ENCODE measurements at regions of chr16 and their contacts with region 1.

Region 1: DNA sequence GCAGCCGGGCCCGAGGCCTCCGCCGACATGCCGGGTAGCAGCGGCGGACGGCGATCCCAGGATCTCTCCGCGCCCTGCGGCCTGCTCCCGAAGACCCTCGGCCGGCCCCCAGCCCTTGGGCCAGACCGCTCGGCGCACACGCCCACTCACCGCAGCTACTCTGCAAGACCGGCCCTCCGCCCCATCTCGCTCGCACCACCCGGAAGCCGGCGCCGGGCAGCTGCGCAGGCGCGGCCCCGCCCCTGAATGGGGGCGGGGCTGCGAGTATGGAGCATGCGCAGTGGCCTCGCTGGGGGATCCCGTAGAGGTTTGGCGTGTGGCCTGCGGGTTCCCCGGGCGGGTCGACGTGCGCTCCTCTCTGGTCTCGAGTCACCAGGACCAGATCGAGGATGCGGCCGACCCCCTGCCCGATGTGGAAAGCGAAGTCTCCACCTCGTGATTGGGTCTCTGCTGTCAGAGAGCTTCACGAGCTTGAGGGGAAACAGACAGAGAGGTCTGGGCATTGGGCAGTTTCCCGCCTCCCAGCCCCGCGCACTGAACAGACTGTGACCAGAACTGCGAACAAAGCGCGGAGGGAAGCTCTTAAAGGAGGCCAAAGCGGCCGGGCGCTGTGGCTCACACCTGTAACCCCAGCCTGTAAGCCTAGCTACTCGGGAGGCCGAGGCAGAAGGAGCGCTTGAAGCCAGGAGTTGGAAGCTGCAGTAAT is at the start of gene KCTD13:
- DNase-seq: peak; percentile 86 to 95 (median 91)
- ATAC-seq: peak; percentile 98
- H3K4me3 ChIP-seq: peak within 1 kb of the TSS; percentile 99
- H3K27ac ChIP-seq: peak within 1 kb of the TSS; percentile 84 to 88
- H3K4me1 ChIP-seq: peaks cover 7 to 28% of the 10 kb centered on the region in 2 donors
- H3K27me3 ChIP-seq: no peaks in the 10 kb centered on the region
- CTCF ChIP-seq: no peak
- polyA plus RNA-seq, gene KCTD13: 18.3 to 24.2 (median 21.3) TPM

Region 2: DNA sequence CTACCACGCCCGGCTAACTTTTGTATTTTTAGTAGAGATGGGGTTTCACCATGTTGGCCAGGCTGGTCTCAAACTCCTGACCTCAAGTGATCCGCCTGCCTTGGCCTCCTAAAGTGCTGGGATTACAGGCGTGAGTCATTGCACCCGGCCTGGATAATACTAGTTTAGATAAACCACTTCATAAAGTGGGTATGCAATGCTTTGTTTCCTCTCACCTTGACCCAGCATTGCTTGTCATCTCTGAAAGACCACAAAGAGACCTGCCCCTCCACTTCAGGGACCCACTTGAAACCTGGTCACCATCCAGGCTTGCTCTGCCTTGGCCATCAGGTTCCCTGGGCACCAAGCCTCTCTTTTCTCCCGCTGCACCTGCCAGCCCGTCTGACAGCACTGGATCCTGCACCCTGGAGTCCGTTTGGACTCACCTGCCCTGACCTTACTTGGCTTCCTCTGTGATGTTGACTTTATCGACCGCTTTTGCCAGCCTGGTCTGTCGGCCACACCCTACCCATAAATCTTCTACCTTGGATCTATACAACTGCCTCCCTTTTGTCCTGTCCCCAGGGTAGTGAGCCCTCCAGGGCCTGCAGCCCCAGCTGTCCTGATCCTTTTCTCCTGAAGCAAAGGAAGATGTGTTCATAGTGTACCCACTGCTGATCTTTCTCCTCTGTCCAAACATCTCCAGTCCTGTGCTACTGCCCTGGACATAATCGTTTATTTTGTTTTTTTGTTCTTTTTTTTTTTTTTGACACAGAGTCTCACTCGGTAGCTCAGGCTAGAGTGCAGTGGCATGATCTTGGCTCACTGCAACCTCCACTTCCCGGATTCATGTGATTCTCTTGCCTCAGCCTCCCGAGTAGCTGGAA is 160.8 kb before region 1 on chr16:
- intact Hi-C with region 1: no loop called
- DNase-seq: peak in 2 of 4 donors; percentile 50 to 87
- ATAC-seq: peak; percentile 88
- H3K4me3 ChIP-seq: no peak overlapping the region
- H3K27ac ChIP-seq: no peak overlapping the region
- H3K4me1 ChIP-seq: peaks cover 0 to 3% of the 10 kb centered on the region in 2 donors
- H3K27me3 ChIP-seq: no peaks in the 10 kb centered on the region
- CTCF ChIP-seq: no peak

Region 3: GRCh38 chr16:29862884-29863668 is 63.1 kb before region 1 on chr16 and contains the start of gene CDIPT:
- intact Hi-C with region 1: loop called in 1 of 2 experiments (anchors 10 kb)
- DNase-seq: peak; percentile 94 to 97 (median 96)
- ATAC-seq: peak; percentile 99
- H3K4me3 ChIP-seq: peak within 1 kb of the TSS; percentile 81 to 86
- H3K27ac ChIP-seq: peak within 1 kb of the TSS; percentile 84 to 87
- H3K4me1 ChIP-seq: peaks cover 9 to 24% of the 10 kb centered on the region in 2 donors
- H3K27me3 ChIP-seq: no peaks in the 10 kb centered on the region
- CTCF ChIP-seq: peak; percentile 29 to 62
- polyA plus RNA-seq, gene CDIPT: 72.5 to 80.5 (median 78.3) TPM

Measured in left lung (tissue), 14 donors.